ENCODE measurements at regions of chr1 and their contacts with region 1.

Region 1: GRCh38 chr1:16351994-16352841 is at the start of gene FBXO42:
- DNase-seq: peak; percentile 93
- ATAC-seq: peak; percentile 96
- H3K4me3 Mint-ChIP-seq: peak within 1 kb of the TSS; percentile 93
- H3K27ac Mint-ChIP-seq: peak within 1 kb of the TSS; percentile 95
- H3K4me1 Mint-ChIP-seq: peaks cover 23% of the 10 kb centered on the region
- H3K27me3 Mint-ChIP-seq: no peaks in the 10 kb centered on the region
- total RNA-seq, gene FBXO42: 17.6 to 19.7 TPM

Region 2: GRCh38 chr1:16293538-16293937 is 58.7 kb before region 1 on chr1:
- CTCF ChIA-PET with region 1: no interaction called
- DNase-seq: no peak
- ATAC-seq: no peak
- H3K4me3 Mint-ChIP-seq: no peak overlapping the region
- H3K27ac Mint-ChIP-seq: no peak overlapping the region
- H3K4me1 Mint-ChIP-seq: peaks cover 2% of the 10 kb centered on the region
- H3K27me3 Mint-ChIP-seq: no peaks in the 10 kb centered on the region

Region 3: GRCh38 chr1:16366722-16367257 is 14.6 kb after region 1 on chr1 and contains the start of gene SZRD1:
- CTCF ChIA-PET with region 1: interaction called, 84 read pairs
- DNase-seq: peak; percentile 98
- ATAC-seq: peak; percentile 89
- H3K4me3 Mint-ChIP-seq: peak within 1 kb of the TSS; percentile 99
- H3K27ac Mint-ChIP-seq: peak within 1 kb of the TSS; percentile 99
- H3K4me1 Mint-ChIP-seq: peaks cover 42% of the 10 kb centered on the region
- H3K27me3 Mint-ChIP-seq: no peaks in the 10 kb centered on the region
- total RNA-seq, gene SZRD1: 161 to 189 TPM

Measured in activated CD8-positive, alpha-beta memory T cell treated with anti-CD3 and anti-CD28 coated beads, Interleukin-2, amount 10 ng/mL, durations not matched to agents 7 days and 5 days (primary cell).